PC-9 (cell line): ENCODE measurements at regions of chr20 and their contacts with region 1.

Region 1: DNA sequence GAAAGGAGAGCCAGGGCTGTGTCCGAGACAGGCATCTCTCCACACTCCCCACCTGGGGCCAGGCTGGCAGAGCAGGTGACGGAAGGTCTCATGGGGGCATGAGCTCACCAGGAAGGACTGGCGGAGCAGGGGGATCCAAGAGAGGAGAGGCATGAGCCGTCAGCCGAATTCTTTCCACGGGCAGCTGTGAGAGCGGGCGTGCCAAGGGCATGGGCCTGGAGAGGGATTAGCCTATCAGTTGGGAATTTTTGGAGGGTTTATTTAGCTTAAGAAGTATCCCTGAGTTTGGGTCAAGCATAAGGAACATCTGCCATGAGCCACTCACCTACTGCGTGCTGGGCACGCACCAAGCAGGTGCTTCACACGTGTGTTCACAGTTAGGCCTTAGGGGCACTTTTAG is 60.2 kb upstream of the ZNFX1 start:
- DNase-seq: no peak
- H3K4me3 ChIP-seq: no peak overlapping the region
- H3K27ac ChIP-seq: no peak overlapping the region
- H3K4me1 ChIP-seq: 0 out of 2 replicates have a peak, but pooled peaks cover 3% of the 10 kb centered on the region
- H3K27me3 ChIP-seq: peaks cover 4% of the 10 kb centered on the region; the same call in 1 of the 2 replicates
- CTCF ChIP-seq: no peak

Region 2: GRCh38 chr20:49397525-49397924 is 59.5 kb after region 1 on chr20:
- CTCF ChIA-PET with region 1: no interaction called
- POLR2A ChIA-PET with region 1: no interaction called
- intact Hi-C with region 1: no loop called
- DNase-seq: peak; percentile 31 to 47
- H3K4me3 ChIP-seq: no peak overlapping the region
- H3K27ac ChIP-seq: no peak overlapping the region
- H3K4me1 ChIP-seq: no peaks in the 10 kb centered on the region
- H3K27me3 ChIP-seq: peaks cover 7% of the 10 kb centered on the region
- CTCF ChIP-seq: no peak

Region 3: GRCh38 chr20:49484180-49485140 is 146.4 kb after region 1 on chr20:
- CTCF ChIA-PET with region 1: interaction called, 7 read pairs
- POLR2A ChIA-PET with region 1: no interaction called
- intact Hi-C with region 1: loop called (anchors 1 kb)
- DNase-seq: peak; percentile 64 to 80
- H3K4me3 ChIP-seq: peak overlapping the region; percentile 59
- H3K27ac ChIP-seq: no peak overlapping the region
- H3K4me1 ChIP-seq: 0 out of 2 replicates have a peak, but pooled peaks cover 6% of the 10 kb centered on the region
- H3K27me3 ChIP-seq: peaks cover 41% of the 10 kb centered on the region
- CTCF ChIP-seq: peak; percentile 86

Region 4: GRCh38 chr20:49508435-49509199 is 170.6 kb after region 1 on chr20:
- CTCF ChIA-PET with region 1: no interaction called
- POLR2A ChIA-PET with region 1: no interaction called
- intact Hi-C with region 1: loop called (anchors 1 kb)
- DNase-seq: peak in 1 of 2 experiments; percentile 33
- H3K4me3 ChIP-seq: no peak overlapping the region
- H3K27ac ChIP-seq: no peak overlapping the region
- H3K4me1 ChIP-seq: no peaks in the 10 kb centered on the region
- H3K27me3 ChIP-seq: peaks cover 11% of the 10 kb centered on the region; the same call in 1 of the 2 replicates
- CTCF ChIP-seq: peak; percentile 72

Region 5: DNA sequence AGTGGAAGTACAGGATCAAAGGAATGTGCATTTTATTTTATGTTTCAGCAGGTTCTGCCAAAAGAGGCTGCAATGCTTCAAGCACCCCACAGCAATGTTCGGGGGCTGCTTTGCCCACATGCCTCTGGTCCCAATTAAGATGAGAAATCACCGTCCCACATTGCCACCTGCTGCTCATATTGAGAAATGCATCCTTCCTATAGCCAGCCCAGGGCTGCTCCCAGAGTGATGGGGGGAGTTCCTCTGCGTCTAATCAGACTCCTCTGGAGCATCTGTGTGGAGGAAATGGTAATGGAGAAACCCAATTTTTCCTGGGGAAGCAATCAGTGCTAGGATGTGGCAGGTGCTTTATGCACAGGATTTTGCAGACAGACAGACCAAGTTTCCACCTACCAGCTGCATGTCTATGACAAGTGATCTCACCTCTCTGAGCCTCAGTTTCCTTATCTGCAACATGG is 196.2 kb after region 1 on chr20:
- CTCF ChIA-PET with region 1: interaction called, 3 read pairs
- POLR2A ChIA-PET with region 1: no interaction called
- intact Hi-C with region 1: loop called (anchors 1 kb)
- DNase-seq: peak; percentile 59 to 63
- H3K4me3 ChIP-seq: no peak overlapping the region
- H3K27ac ChIP-seq: no peak overlapping the region
- H3K4me1 ChIP-seq: peaks cover 17% of the 10 kb centered on the region
- H3K27me3 ChIP-seq: no peaks in the 10 kb centered on the region
- CTCF ChIP-seq: peak; percentile 97

Region 6: GRCh38 chr20:49583669-49584417 is 245.8 kb after region 1 on chr20:
- CTCF ChIA-PET with region 1: no interaction called
- POLR2A ChIA-PET with region 1: no interaction called
- intact Hi-C with region 1: no loop called
- DNase-seq: peak; percentile 88 to 99
- H3K4me3 ChIP-seq: peak overlapping the region; percentile 15; the same call in 1 of the 2 replicates
- H3K27ac ChIP-seq: peak overlapping the region; percentile 94
- H3K4me1 ChIP-seq: peaks cover 98% of the 10 kb centered on the region
- H3K27me3 ChIP-seq: no peaks in the 10 kb centered on the region
- CTCF ChIP-seq: no peak; the same call in 1 of the 2 replicates

Region 7: GRCh38 chr20:50172347-50173013 is 834.4 kb after region 1 on chr20:
- CTCF ChIA-PET with region 1: no interaction called
- POLR2A ChIA-PET with region 1: no interaction called
- intact Hi-C with region 1: loop called (anchors 10 kb)
- DNase-seq: peak; percentile 74 to 88
- H3K4me3 ChIP-seq: peak overlapping the region; percentile 67
- H3K27ac ChIP-seq: peak overlapping the region; percentile 62
- H3K4me1 ChIP-seq: peaks cover 21% of the 10 kb centered on the region
- H3K27me3 ChIP-seq: no peaks in the 10 kb centered on the region
- CTCF ChIP-seq: no peak